Transverse colon (tissue), 4 donors: ENCODE measurements at regions of chr14 and their contacts with region 1.

Region 1: GRCh38 chr14:94945615-94946014 is 175.7 kb upstream of the GSC start:
- DNase-seq: no peak
- H3K4me3 ChIP-seq: no peak overlapping the region
- H3K27ac ChIP-seq: no peak overlapping the region
- H3K4me1 ChIP-seq: no peaks in the 10 kb centered on the region
- H3K27me3 ChIP-seq: no peaks in the 10 kb centered on the region
- CTCF ChIP-seq: no peak
- EP300 ChIP-seq: no peak
- POLR2A ChIP-seq: no peak

Region 2: DNA sequence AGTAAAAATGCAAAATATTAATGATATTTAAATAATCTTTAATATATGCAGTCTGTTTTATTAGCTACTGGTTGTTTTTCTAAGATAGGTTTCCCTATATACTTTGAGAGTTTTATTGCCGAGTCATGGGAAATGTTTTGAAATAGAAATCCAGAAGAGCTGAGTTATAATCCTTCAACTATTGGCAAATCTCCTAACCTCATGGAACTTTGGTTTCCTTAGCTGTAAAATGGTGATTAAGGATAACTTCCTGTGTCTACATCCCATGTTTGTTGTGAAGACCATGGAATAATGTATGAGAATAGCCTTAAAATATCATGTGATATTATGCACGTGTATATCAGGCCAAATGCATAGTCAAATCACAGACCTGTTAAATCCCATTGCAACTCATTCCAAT is 1463.9 kb before region 1 on chr14:
- in situ Hi-C with region 1: no loop called
- intact Hi-C with region 1: no loop called
- DNase-seq: no peak
- H3K4me3 ChIP-seq: no peak overlapping the region
- H3K27ac ChIP-seq: no peak overlapping the region
- H3K4me1 ChIP-seq: no peaks in the 10 kb centered on the region
- H3K27me3 ChIP-seq: no peaks in the 10 kb centered on the region
- CTCF ChIP-seq: no peak
- EP300 ChIP-seq: no peak
- POLR2A ChIP-seq: no peak

Region 3: GRCh38 chr14:94717808-94718207 is 227.8 kb before region 1 on chr14:
- in situ Hi-C with region 1: no loop called
- intact Hi-C with region 1: no loop called
- DNase-seq: no peak
- H3K4me3 ChIP-seq: no peak overlapping the region
- H3K27ac ChIP-seq: no peak overlapping the region
- H3K4me1 ChIP-seq: no peaks in the 10 kb centered on the region
- H3K27me3 ChIP-seq: no peaks in the 10 kb centered on the region
- CTCF ChIP-seq: no peak
- EP300 ChIP-seq: no peak
- POLR2A ChIP-seq: no peak

Region 4: DNA sequence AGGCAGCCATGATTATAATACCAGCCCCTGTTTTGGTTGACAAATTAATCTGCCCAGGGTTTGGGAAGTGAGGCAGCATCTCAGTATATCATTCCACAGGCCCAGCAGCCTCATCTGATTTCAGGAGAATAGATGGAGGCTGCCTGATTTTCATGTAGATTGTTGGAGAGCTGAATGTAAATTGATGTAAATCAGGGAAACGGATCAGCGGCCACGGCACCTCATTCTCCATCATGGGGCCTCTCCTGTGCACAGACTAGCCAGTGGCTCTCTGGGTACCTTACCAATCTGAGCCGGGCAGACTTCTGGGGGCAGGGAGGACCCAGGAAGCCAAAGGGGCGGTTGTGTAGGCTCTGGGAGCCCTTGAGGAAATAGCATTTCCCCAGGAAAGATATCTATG is 112.0 kb before region 1 on chr14:
- in situ Hi-C with region 1: no loop called
- intact Hi-C with region 1: loop called (anchors 10 kb)
- DNase-seq: no peak
- H3K4me3 ChIP-seq: no peak overlapping the region
- H3K27ac ChIP-seq: no peak overlapping the region
- H3K4me1 ChIP-seq: no peaks in the 10 kb centered on the region
- H3K27me3 ChIP-seq: no peaks in the 10 kb centered on the region
- CTCF ChIP-seq: no peak
- EP300 ChIP-seq: no peak
- POLR2A ChIP-seq: no peak